MCF 10A (cell line): ENCODE measurements at regions of chr3 and their contacts with region 1.

Region 1: GRCh38 chr3:59575113-59576001 is 525.5 kb upstream of the CFAP20DC start:
- DNase-seq: peak; percentile 90
- H3K4me3 Mint-ChIP-seq: no peak overlapping the region
- H3K27ac Mint-ChIP-seq: no peak overlapping the region
- H3K4me1 Mint-ChIP-seq: peaks cover 34% of the 10 kb centered on the region
- H3K27me3 Mint-ChIP-seq: no peaks in the 10 kb centered on the region
- CTCF ChIP-seq: peak; percentile 91

Region 2: GRCh38 chr3:58824285-58824684 is 751.1 kb before region 1 on chr3:
- CTCF ChIA-PET with region 1: interaction called, 6 read pairs
- POLR2A ChIA-PET with region 1: no interaction called
- intact Hi-C with region 1: loop called (anchors 5 kb)
- DNase-seq: peak; percentile 78
- H3K4me3 Mint-ChIP-seq: no peak overlapping the region
- H3K27ac Mint-ChIP-seq: no peak overlapping the region
- H3K4me1 Mint-ChIP-seq: no peaks in the 10 kb centered on the region
- H3K27me3 Mint-ChIP-seq: no peaks in the 10 kb centered on the region
- CTCF ChIP-seq: peak; percentile 77

Region 3: DNA sequence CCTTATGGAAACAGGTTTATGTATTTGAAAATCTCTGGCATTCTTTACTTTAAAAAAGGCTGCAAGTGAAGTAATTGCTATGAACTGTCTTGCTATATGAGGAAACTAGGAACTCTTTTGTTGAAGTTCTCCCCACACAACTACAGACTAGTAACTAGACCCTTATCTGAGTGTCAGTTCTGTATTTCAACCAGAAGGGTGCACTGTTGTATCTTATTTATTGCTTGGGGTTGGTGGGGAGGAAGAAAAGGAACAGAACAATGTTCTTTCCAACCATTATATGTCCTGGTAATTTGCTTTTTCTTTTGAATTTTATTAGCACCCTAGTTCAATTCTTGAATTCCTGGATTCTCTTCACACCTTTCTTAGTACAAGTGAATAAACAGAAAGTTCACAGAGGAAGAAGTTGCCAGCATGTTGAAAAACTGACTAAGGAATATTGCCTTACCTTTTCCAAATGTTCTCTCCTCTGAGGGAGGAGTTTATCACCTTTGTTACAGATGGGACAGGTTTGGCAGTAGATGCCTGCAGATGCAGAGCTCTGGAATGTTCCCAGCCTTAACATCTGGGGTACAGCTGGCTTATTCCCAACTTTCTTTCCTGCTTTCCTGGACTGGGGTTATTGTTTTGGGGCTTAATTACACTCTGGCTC is 363.1 kb before region 1 on chr3:
- CTCF ChIA-PET with region 1: interaction called, 20 read pairs
- POLR2A ChIA-PET with region 1: interaction called, 3 read pairs
- intact Hi-C with region 1: loop called (anchors 1 kb)
- DNase-seq: peak; percentile 50
- H3K4me3 Mint-ChIP-seq: no peak overlapping the region
- H3K27ac Mint-ChIP-seq: no peak overlapping the region
- H3K4me1 Mint-ChIP-seq: peaks cover 5% of the 10 kb centered on the region
- H3K27me3 Mint-ChIP-seq: no peaks in the 10 kb centered on the region
- CTCF ChIP-seq: peak; percentile 70

Region 4: GRCh38 chr3:59518283-59519055 is 56.9 kb before region 1 on chr3:
- CTCF ChIA-PET with region 1: no interaction called
- POLR2A ChIA-PET with region 1: no interaction called
- intact Hi-C with region 1: no loop called
- DNase-seq: no peak
- H3K4me3 Mint-ChIP-seq: no peak overlapping the region
- H3K27ac Mint-ChIP-seq: no peak overlapping the region
- H3K4me1 Mint-ChIP-seq: peaks cover 6% of the 10 kb centered on the region
- H3K27me3 Mint-ChIP-seq: no peaks in the 10 kb centered on the region
- CTCF ChIP-seq: no peak

Region 5: DNA sequence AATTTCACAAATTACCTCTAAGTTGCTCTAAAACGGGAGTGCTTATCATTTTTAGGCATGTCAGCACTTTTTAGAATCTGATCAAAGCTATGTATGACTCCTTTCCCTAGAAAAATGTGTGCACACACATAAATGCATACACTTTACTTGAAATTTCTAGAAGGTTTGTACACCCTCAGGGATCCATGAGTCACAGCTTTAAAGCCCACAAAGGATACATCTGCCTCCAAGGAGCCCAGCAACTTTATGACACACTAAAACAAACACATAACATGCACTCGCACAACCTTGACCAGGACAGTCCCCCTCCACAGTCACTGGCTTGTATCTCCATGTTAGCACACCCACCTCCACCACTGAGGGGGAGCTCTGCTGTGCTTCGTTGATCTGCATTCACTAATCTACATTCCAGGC is 196.4 kb after region 1 on chr3:
- CTCF ChIA-PET with region 1: interaction called, 10 read pairs
- POLR2A ChIA-PET with region 1: no interaction called
- intact Hi-C with region 1: no loop called
- DNase-seq: peak; percentile 71
- H3K4me3 Mint-ChIP-seq: no peak overlapping the region
- H3K27ac Mint-ChIP-seq: peak overlapping the region; percentile 57
- H3K4me1 Mint-ChIP-seq: peaks cover 33% of the 10 kb centered on the region
- H3K27me3 Mint-ChIP-seq: no peaks in the 10 kb centered on the region
- CTCF ChIP-seq: no peak

Region 6: DNA sequence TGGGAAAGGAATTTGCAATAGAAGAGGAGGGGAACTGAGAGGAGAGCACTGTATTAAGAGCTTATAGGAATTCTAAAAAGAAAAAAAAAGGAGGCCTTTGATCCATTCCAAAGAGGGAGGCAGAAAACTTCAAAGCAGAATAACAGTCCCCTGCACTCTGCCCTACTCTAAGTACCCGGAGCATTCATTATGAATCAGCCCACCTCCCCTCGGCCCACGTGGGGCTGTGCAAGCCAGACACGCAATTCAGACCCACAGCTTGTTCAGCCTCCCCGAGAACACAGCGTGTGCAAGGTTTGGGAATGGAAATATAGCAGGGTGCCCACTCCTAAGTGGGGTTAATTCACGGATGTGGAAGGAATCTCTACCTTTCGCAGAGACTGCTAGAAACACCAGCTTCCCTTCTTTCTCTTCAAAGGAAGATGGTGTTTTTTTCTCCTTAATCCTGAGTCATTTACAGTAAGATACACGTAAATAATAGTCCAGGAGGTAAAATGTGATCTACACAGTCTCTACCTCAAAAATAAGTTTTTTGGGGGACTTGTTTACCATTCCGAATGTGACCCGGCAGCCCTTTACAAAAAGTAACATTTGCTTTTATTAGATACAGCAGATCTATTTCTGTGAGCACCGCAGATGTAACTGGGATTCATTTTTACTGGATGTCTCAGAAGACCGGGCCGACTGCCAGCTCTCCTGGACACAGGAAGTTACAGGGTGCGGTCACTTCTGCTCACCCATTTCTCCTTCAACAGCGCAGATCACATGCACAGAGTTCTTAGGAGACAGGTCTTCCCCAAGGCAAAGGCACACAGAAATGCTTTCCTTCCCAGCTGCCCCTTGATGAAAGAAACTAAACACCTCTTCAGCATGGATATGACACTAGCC is 242.9 kb after region 1 on chr3:
- CTCF ChIA-PET with region 1: interaction called, 119 read pairs
- POLR2A ChIA-PET with region 1: interaction called, 3 read pairs
- intact Hi-C with region 1: no loop called
- DNase-seq: peak; percentile 97
- H3K4me3 Mint-ChIP-seq: peak overlapping the region; percentile 3
- H3K27ac Mint-ChIP-seq: peak overlapping the region; percentile 87
- H3K4me1 Mint-ChIP-seq: peaks cover 25% of the 10 kb centered on the region
- H3K27me3 Mint-ChIP-seq: no peaks in the 10 kb centered on the region
- CTCF ChIP-seq: no peak

Region 7: GRCh38 chr3:59857589-59858346 is 282.4 kb after region 1 on chr3:
- CTCF ChIA-PET with region 1: interaction called, 124 read pairs
- POLR2A ChIA-PET with region 1: interaction called, 3 read pairs
- intact Hi-C with region 1: loop called (anchors 1 kb)
- DNase-seq: peak; percentile 86
- H3K4me3 Mint-ChIP-seq: no peak overlapping the region
- H3K27ac Mint-ChIP-seq: no peak overlapping the region
- H3K4me1 Mint-ChIP-seq: peaks cover 10% of the 10 kb centered on the region
- H3K27me3 Mint-ChIP-seq: no peaks in the 10 kb centered on the region
- CTCF ChIP-seq: peak; percentile 75